ENCODE measurements at regions of chr9 and their contacts with region 1.

Region 1: GRCh38 chr9:34701769-34702736 is 7.9 kb downstream of the CCL21 start:
- DNase-seq: peak; percentile 93
- H3K4me3 ChIP-seq: peak overlapping the region; percentile 56 to 72 (median 62)
- H3K27ac ChIP-seq: peak overlapping the region; percentile 78 to 86 (median 80)
- H3K4me1 ChIP-seq: peaks cover 0 to 11% (median 5%) of the 10 kb centered on the region in 4 donors
- H3K27me3 ChIP-seq: no peaks in the 10 kb centered on the region
- CTCF ChIP-seq: peak; percentile 90 to 98 (median 95)
- EP300 ChIP-seq: no peak
- POLR2A ChIP-seq: no peak

Region 2: GRCh38 chr9:34646211-34647083 is 55.6 kb before region 1 on chr9 and contains the start of gene GALT:
- intact Hi-C with region 1: loop called (anchors 5 kb)
- DNase-seq: peak; percentile 97
- H3K4me3 ChIP-seq: peak within 1 kb of the TSS; percentile 50 to 81 (median 59)
- H3K27ac ChIP-seq: peak within 1 kb of the TSS; percentile 83 to 94 (median 90)
- H3K4me1 ChIP-seq: peaks cover 0 to 36% (median 35%) of the 10 kb centered on the region in 4 donors
- H3K27me3 ChIP-seq: no peaks in the 10 kb centered on the region
- CTCF ChIP-seq: peak in 3 of 4 experiments; percentile 27 to 39 (median 31)
- EP300 ChIP-seq: no peak
- POLR2A ChIP-seq: peak in 1 of 2 donors; percentile 43
- total RNA-seq, gene GALT: 28.8 to 51.0 (median 33.1) TPM

Region 3: GRCh38 chr9:34665381-34666250 is 36.4 kb before region 1 on chr9:
- intact Hi-C with region 1: loop called (anchors 2 kb)
- DNase-seq: peak; percentile 99
- H3K4me3 ChIP-seq: peak overlapping the region; percentile 72 to 81 (median 78)
- H3K27ac ChIP-seq: peak overlapping the region; percentile 96 to 100 (median 100)
- H3K4me1 ChIP-seq: peaks cover 0 to 25% (median 19%) of the 10 kb centered on the region in 4 donors
- H3K27me3 ChIP-seq: no peaks in the 10 kb centered on the region
- CTCF ChIP-seq: no peak
- EP300 ChIP-seq: peak in 2 of 4 donors; percentile 10 to 48
- POLR2A ChIP-seq: peak; percentile 92 to 94

Measured in sigmoid colon (tissue), 7 donors.